IMR-90 (cell line): ENCODE measurements at regions of chr15 and their contacts with region 1.

Region 1: GRCh38 chr15:45457641-45458433 is 64.7 kb downstream of the SLC30A4 start:
- DNase-seq: peak; percentile 77
- ATAC-seq: peak; percentile 64
- H3K4me3 ChIP-seq: peak overlapping the region; percentile 28; the same call in 1 of the 2 replicates
- H3K27ac ChIP-seq: no peak overlapping the region
- H3K4me1 ChIP-seq: peaks cover 19% of the 10 kb centered on the region
- H3K27me3 ChIP-seq: no peaks in the 10 kb centered on the region
- CTCF ChIP-seq: peak; percentile 91
- POLR2A ChIP-seq: peak; percentile 35; the same call in 1 of the 2 replicates
- RAD21 ChIP-seq: peak; percentile 95

Region 2: DNA sequence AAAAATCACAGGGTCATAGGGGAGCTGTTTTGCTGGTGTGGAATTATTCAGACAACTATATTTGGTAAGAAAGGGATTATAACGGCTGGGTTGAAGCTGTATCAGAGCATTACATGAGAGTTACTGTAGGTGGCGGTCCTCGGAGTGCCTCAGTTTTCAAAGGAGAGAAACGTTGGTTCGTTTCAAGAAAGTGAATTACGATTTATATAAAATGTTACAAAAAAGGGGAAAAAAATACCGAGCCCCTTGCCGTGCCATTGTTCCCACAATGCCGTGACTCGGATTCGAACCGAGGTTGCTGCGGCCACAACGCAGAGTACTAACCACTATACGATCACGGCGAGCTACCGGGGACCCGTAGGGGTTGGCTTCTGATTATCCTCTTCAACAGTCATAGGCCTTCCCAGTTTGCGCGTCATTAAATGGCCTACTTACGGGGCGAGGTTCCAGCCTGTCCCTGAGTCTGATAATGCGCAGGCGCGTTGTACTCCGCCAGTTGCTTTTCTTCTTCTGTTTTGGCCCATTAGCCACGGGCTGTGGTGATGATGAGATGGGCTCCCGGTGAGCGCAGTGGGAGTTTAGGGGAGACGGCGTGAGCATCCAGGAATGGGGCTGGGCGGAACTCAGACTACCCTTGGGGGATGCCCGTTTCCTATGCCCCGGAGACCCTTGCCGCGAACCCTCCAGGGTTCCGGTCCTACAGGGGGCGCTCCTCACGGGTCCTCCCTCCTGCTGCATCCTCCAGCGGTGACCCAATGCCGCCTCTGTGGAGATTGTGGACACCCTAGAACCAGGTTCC is 259.3 kb before region 1 on chr15:
- CTCF ChIA-PET with region 1: no interaction called
- POLR2A ChIA-PET with region 1: no interaction called
- dilution Hi-C with region 1: no loop called
- in situ Hi-C with region 1: no loop called
- intact Hi-C with region 1: loop called (anchors 1 kb)
- DNase-seq: peak; percentile 96
- ATAC-seq: peak; percentile 69
- H3K4me3 ChIP-seq: peak overlapping the region; percentile 70
- H3K27ac ChIP-seq: peak overlapping the region; percentile 73
- H3K4me1 ChIP-seq: peaks cover 2% of the 10 kb centered on the region; the same call in 1 of the 2 replicates
- H3K27me3 ChIP-seq: peaks cover 1% of the 10 kb centered on the region; the same call in 1 of the 2 replicates
- CTCF ChIP-seq: peak; percentile 69
- POLR2A ChIP-seq: peak; percentile 83
- RAD21 ChIP-seq: peak; percentile 44

Region 3: DNA sequence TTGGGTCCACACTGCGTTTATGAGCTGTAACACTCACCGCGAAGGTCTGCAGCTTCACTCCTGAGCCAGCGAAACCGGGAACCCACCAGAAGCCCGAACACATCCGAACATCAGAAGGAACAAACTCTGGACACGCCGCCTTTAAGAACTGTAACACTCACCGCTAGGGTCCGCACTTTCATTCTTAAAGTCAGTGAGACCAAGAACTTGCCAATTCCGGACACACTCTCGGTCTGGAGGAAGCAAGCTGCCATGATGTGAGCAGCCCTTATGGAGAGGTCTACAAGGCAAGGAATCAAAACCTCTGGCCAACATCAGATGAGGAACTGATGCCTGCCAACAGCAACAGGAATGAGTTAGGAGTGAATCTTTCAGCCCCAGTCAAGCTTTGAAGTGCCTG is 142.9 kb before region 1 on chr15:
- CTCF ChIA-PET with region 1: no interaction called
- POLR2A ChIA-PET with region 1: no interaction called
- dilution Hi-C with region 1: no loop called
- in situ Hi-C with region 1: no loop called
- intact Hi-C with region 1: no loop called
- DNase-seq: peak; percentile 11
- ATAC-seq: no peak
- H3K4me3 ChIP-seq: no peak overlapping the region
- H3K27ac ChIP-seq: no peak overlapping the region
- H3K4me1 ChIP-seq: no peaks in the 10 kb centered on the region
- H3K27me3 ChIP-seq: no peaks in the 10 kb centered on the region
- CTCF ChIP-seq: no peak
- POLR2A ChIP-seq: no peak
- RAD21 ChIP-seq: no peak

Region 4: DNA sequence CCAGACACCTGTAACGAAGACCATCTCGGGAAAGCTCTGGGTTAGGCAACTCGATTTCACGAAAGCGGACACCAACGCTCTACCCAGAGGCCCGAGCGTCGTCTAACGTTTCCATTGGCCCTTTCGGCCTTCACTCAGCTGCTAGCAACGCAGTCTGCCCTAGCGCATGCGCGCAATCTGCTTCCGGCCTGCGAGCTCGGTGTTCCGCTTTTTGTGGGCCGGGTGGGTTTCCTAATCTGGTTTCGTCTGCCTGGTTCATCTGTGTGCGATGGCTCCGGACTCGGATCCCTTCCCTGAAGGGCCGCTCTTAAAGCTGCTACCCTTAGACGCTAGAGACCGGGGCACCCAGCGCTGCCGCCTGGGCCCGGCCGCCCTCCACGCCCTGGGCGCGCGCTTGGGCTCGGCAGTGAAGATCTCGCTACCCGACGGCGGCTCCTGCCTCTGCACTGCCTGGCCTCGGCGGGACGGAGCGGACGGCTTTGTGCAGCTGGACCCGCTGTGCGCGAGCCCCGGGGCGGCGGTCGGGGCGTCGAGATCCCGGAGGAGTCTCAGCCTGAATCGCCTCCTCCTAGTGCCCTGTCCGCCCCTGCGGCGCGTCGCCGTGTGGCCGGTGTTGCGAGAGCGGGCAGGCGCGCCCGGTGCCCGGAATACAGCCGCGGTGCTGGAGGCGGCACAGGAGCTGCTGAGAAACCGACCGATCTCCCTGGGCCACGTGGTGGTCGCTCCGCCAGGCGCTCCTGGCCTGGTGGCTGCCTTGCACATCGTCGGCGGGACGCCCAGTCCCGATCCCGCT is 55.5 kb before region 1 on chr15:
- CTCF ChIA-PET with region 1: interaction called, 4 read pairs
- POLR2A ChIA-PET with region 1: no interaction called
- dilution Hi-C with region 1: no loop called
- in situ Hi-C with region 1: no loop called
- intact Hi-C with region 1: loop called (anchors 1 kb)
- DNase-seq: peak; percentile 99
- ATAC-seq: peak; percentile 95
- H3K4me3 ChIP-seq: peak overlapping the region; percentile 71
- H3K27ac ChIP-seq: peak overlapping the region; percentile 75
- H3K4me1 ChIP-seq: no peaks in the 10 kb centered on the region
- H3K27me3 ChIP-seq: peaks cover 3% of the 10 kb centered on the region; the same call in 1 of the 2 replicates
- CTCF ChIP-seq: no peak
- POLR2A ChIP-seq: 0 out of 2 replicates have a peak, but pooled peaks have one; percentile 32
- RAD21 ChIP-seq: no peak

Region 5: GRCh38 chr15:45439521-45440260 is 18.1 kb before region 1 on chr15:
- CTCF ChIA-PET with region 1: interaction called, 12 read pairs
- POLR2A ChIA-PET with region 1: no interaction called
- dilution Hi-C with region 1: no loop called
- in situ Hi-C with region 1: no loop called
- intact Hi-C with region 1: no loop called
- DNase-seq: no peak
- ATAC-seq: no peak
- H3K4me3 ChIP-seq: no peak overlapping the region
- H3K27ac ChIP-seq: no peak overlapping the region
- H3K4me1 ChIP-seq: peaks cover 8% of the 10 kb centered on the region
- H3K27me3 ChIP-seq: no peaks in the 10 kb centered on the region
- CTCF ChIP-seq: no peak
- POLR2A ChIP-seq: no peak
- RAD21 ChIP-seq: no peak

Region 6: DNA sequence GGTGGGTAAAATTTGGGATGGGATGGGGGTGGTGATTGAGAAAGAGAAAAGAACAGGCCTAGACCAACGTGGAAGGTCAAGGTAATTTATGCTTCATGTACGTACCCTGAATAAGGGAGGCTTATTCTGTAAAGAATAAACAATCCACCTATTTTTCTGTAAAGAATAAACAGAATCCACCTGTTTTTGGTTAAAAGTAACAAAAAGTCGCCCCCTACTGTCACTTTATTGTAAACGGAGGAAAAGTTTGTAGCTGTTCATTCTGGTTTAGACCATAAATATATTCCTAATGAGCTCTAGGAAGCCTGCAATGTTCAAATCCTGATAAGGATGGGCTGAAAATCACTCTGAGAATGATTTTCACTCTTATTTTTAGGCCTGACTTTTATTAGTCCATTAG is 153.5 kb after region 1 on chr15:
- CTCF ChIA-PET with region 1: interaction called, 25 read pairs
- POLR2A ChIA-PET with region 1: no interaction called
- dilution Hi-C with region 1: no loop called
- in situ Hi-C with region 1: loop called (anchors 10 kb)
- intact Hi-C with region 1: loop called (anchors 1 kb)
- DNase-seq: no peak
- ATAC-seq: no peak
- H3K4me3 ChIP-seq: no peak overlapping the region
- H3K27ac ChIP-seq: no peak overlapping the region
- H3K4me1 ChIP-seq: no peaks in the 10 kb centered on the region
- H3K27me3 ChIP-seq: no peaks in the 10 kb centered on the region
- CTCF ChIP-seq: peak; percentile 54
- POLR2A ChIP-seq: no peak
- RAD21 ChIP-seq: peak; percentile 41